ENCODE measurements at regions of chr2 and their contacts with region 1.

Region 1: DNA sequence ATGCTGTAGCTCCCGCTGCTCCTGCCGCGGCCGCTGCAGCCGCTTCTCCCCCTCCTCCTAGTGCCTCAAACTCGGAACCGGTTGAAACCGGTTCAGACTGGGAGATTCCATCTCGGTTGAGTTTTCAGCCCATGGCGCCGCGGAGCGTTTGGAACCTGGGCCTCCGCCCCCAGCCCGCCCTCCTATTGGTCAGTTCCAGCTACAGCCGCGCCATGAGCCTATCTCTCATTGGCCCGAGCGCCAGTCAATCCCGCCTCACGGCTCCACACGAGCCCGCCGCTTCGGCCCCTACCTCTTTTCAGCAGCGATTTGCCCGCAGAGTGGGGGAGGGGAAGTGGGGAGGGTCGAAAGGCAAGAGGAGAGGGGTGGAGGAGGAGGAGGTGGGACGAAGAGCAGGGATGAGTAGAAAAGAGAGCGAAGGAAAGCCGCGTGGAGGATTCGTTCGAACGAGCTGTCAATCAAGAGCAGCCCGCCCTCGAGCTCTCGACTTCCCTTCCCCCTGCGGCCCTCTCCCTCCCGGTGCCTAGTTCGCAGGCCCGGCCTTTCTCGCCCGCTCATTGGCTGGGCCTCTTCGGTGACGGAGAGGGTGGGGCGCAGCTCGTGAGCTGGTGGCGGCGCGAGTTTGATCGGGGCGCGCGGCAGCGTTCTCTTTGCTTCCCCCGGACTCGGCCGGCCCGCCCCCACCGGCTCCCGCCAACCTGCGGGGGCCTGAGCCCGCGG is at the start of gene XPO1:
- DNase-seq: peak; percentile 99 to 100 (median 99)
- H3K4me3 ChIP-seq: peak within 1 kb of the TSS; percentile 54 to 96 (median 79)
- H3K27ac ChIP-seq: peak within 1 kb of the TSS; percentile 92 to 99 (median 98)
- H3K27me3 ChIP-seq: no peaks in the 10 kb centered on the region
- CTCF ChIP-seq: peak in 5 of 56 donors; percentile 3 to 27 (median 5)
- total RNA-seq, gene XPO1: 103 to 387 (median 148) TPM

Region 2: GRCh38 chr2:61176755-61177726 is 361.3 kb before region 1 on chr2:
- intact Hi-C with region 1: loop called (anchors 2 to 5 kb)
- DNase-seq: peak; percentile 78 to 95 (median 88)
- H3K4me3 ChIP-seq: peak overlapping the region; percentile 69 to 98 (median 87)
- H3K27ac ChIP-seq: peak overlapping the region; percentile 96 to 100 (median 99)
- H3K27me3 ChIP-seq: no peaks in the 10 kb centered on the region
- CTCF ChIP-seq: peak in 42 of 56 donors; percentile 2 to 61 (median 34)

Region 3: GRCh38 chr2:61670591-61671501 is 132.5 kb after region 1 on chr2:
- intact Hi-C with region 1: loop called (anchors 2 kb)
- DNase-seq: peak in 8 of 10 donors; percentile 16 to 78 (median 52)
- H3K4me3 ChIP-seq: peak overlapping the region in 58 of 59 donors; percentile 5 to 65 (median 41)
- H3K27ac ChIP-seq: peak overlapping the region; percentile 76 to 100 (median 98)
- H3K27me3 ChIP-seq: no peaks in the 10 kb centered on the region
- CTCF ChIP-seq: peak in 5 of 56 donors; percentile 16 to 29 (median 20)

Region 4: DNA sequence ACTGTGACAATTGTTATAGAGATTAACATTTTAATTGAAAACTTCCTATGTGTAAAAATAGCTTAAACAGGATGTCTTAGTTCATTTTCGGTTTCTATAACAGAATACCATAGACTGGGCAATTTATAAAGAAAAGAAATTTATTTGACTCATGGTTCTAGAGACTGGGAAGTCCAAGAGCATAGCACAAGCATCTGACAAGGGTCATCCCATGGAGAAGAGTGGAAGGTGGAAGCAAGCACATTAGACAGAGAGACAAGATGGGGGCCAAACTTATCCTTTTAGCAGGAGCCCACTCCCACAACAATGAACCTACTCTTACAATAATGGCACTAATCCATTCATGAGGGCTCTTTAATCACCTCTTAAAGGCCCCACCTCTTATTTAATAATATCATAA is 215.2 kb after region 1 on chr2:
- intact Hi-C with region 1: no loop called
- DNase-seq: no peak
- H3K4me3 ChIP-seq: no peak overlapping the region
- H3K27ac ChIP-seq: no peak overlapping the region
- H3K27me3 ChIP-seq: no peaks in the 10 kb centered on the region
- CTCF ChIP-seq: no peak

Region 5: DNA sequence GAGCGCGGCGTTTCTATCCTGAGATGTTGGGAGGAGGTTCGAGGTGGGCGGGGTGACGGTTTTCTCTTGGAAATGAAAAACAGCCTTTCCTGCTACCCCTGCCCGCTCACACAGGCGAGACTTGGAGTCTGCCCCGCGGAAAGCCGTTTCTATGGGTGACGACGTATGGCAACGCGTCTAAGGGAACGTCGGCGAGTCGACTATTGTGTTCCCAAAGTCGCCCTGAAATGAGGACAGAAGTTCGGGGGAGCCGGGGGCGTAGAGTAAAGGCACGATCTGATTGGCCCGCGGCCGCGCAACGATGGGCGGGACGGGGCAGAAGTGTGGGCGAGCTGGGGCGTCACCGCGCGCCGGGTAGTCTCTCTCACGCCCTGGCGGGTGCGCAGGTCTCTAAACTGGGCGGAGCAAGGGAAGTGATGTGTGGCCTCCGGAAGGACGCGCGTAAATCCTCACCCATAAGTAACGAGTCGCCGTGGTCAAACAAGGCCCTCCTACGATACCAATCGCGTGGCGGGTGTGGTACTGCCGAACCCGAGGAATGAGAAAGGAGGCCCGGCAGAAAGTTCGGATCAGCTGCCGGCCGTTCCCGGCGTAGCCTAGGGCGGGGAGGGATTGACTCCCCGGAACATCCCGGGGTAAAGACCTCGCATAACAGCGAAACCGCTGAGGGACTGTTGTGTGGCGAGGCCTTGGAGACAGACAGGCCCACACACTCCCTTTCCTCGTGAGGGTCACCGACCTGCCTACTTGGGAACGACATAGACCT is 225.9 kb after region 1 on chr2:
- intact Hi-C with region 1: loop called (anchors 1 to 2 kb)
- DNase-seq: peak; percentile 96 to 99 (median 98)
- H3K4me3 ChIP-seq: peak overlapping the region; percentile 55 to 95 (median 77)
- H3K27ac ChIP-seq: peak overlapping the region; percentile 90 to 100 (median 98)
- H3K27me3 ChIP-seq: no peaks in the 10 kb centered on the region
- CTCF ChIP-seq: peak in 18 of 56 donors; percentile 2 to 38 (median 22)

Region 6: GRCh38 chr2:61905372-61906185 is 367.2 kb after region 1 on chr2 and contains the start of gene COMMD1:
- intact Hi-C with region 1: loop called in 1 of 2 experiments (anchors 10 kb)
- DNase-seq: peak; percentile 80 to 93 (median 88)
- H3K4me3 ChIP-seq: peak within 1 kb of the TSS; percentile 38 to 98 (median 85)
- H3K27ac ChIP-seq: peak within 1 kb of the TSS; percentile 1 to 91 (median 79)
- H3K27me3 ChIP-seq: no peaks in the 10 kb centered on the region
- CTCF ChIP-seq: peak in 24 of 56 donors; percentile 3 to 42 (median 23)
- total RNA-seq, gene COMMD1: 29.8 to 52.8 (median 41.1) TPM

Measured in dorsolateral prefrontal cortex (tissue), 120 donors.